Heart right ventricle (tissue), 16 donors: ENCODE measurements at regions of chr19 and their contacts with region 1.

Region 1: GRCh38 chr19:54481322-54481930 is 8.3 kb upstream of the CDC42EP5 start:
- DNase-seq: peak in 1 of 2 donors; percentile 27
- ATAC-seq: peak in 4 of 8 donors; percentile 37 to 74 (median 51)
- H3K4me3 ChIP-seq: no peak overlapping the region
- H3K27ac ChIP-seq: no peak overlapping the region
- H3K4me1 ChIP-seq: peaks cover 0 to 27% (median 0%) of the 10 kb centered on the region in 9 donors
- H3K27me3 ChIP-seq: peaks cover 0 to 77% (median 21%) of the 10 kb centered on the region in 7 donors
- CTCF ChIP-seq: peak in 8 of 9 donors; percentile 51 to 79 (median 64)

Region 2: GRCh38 chr19:54439174-54439853 is 42.1 kb before region 1 on chr19:
- intact Hi-C with region 1: no loop called
- DNase-seq: no peak
- ATAC-seq: peak in 6 of 8 donors; percentile 20 to 42 (median 37)
- H3K4me3 ChIP-seq: no peak overlapping the region
- H3K27ac ChIP-seq: no peak overlapping the region
- H3K4me1 ChIP-seq: peaks cover 6 to 40% (median 24%) of the 10 kb centered on the region in 9 donors
- H3K27me3 ChIP-seq: peaks cover 0 to 6% (median 0%) of the 10 kb centered on the region in 7 donors
- CTCF ChIP-seq: peak in 6 of 9 donors; percentile 27 to 57 (median 48)

Region 3: GRCh38 chr19:54662730-54663129 is 181.3 kb after region 1 on chr19 and contains the start of gene LILRB4:
- intact Hi-C with region 1: loop called in 1 of 10 experiments (anchors 5 kb)
- DNase-seq: peak; percentile 15 to 33
- ATAC-seq: peak in 7 of 8 donors; percentile 49 to 79 (median 71)
- H3K4me3 ChIP-seq: peak within 1 kb of the TSS in 3 of 10 donors; percentile 17 to 47 (median 28)
- H3K27ac ChIP-seq: peak within 1 kb of the TSS in 1 of 10 donors; percentile 76
- H3K4me1 ChIP-seq: peaks cover 0 to 20% (median 0%) of the 10 kb centered on the region in 9 donors
- H3K27me3 ChIP-seq: peaks cover 0 to 20% (median 15%) of the 10 kb centered on the region in 7 donors
- CTCF ChIP-seq: no peak
- total RNA-seq, gene LILRB4: 0.99 to 22.4 (median 1.8) TPM

Region 4: DNA sequence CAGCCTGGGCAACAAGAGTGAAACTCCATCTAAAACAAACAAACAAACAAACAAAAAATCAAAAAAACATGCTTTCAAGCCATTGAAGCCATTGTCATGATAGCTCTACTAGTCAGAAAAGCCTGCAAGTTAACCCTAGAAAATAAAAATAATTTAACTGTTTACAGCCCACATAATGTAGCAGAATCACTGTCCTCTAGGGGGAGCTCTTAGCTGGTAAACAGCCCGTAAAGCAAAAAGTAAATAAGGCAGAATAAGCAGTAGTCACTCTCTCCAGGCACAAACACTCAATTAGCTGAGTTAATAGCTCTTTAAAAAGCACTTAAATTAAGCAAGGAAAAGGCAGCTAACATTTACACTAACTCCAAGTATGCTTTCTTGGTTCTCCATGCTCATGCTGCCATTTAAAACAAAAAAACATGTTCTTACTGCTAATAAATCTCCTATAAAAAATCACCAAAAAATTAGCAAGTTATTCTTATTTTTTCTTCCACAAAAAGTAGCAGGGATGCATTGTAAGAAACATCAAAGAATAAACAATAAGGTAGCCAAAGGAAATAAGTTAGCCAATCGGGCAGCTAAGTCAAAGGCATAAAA is 192.7 kb after region 1 on chr19:
- intact Hi-C with region 1: loop called in 8 of 10 experiments (anchors 5 to 10 kb)
- DNase-seq: no peak
- ATAC-seq: no peak
- H3K4me3 ChIP-seq: no peak overlapping the region
- H3K27ac ChIP-seq: no peak overlapping the region
- H3K4me1 ChIP-seq: peaks cover 0 to 18% (median 0%) of the 10 kb centered on the region in 9 donors
- H3K27me3 ChIP-seq: peaks cover 0 to 52% (median 16%) of the 10 kb centered on the region in 7 donors
- CTCF ChIP-seq: peak in 8 of 9 donors; percentile 28 to 73 (median 61)